B cell (primary cell): ENCODE measurements at regions of chr7 and their contacts with region 1.

Region 1: DNA sequence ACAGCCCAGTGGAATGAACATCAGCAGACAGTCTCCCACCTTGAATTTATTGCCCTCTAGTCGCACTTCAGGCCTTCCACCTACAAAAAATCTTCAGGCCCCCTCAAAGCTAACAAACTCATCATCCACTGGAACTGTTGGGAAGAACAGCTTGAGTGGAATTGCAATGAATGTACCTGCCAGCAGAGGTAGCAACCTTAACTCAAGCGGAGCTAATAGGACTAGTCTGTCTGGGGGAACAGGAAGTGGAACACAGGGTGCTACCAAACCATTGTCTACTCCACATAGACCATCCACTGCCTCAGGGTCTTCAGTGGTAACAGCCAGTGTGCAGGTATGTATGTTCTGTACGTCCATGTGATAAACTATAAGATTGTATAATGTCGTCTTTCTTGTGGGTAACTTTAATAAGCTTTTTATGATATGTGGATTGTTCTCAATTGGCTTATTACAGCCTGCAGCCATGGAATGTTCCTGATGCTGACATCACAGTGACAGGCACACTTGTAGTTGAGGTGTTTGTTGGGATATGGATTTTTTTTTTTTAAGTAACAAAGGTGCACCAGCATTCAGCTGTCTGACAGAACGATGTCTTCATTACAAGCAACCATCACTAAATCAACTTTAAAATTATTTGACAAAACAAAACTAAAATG is 53.3 kb downstream of the UBN2 start:
- DNase-seq: no peak
- ATAC-seq: no peak
- H3K4me3 ChIP-seq: no peak overlapping the region
- H3K4me3 Mint-ChIP-seq: no peak overlapping the region
- H3K27ac ChIP-seq: no peak overlapping the region
- H3K27ac Mint-ChIP-seq: no peak overlapping the region
- H3K4me1 ChIP-seq: no peaks in the 10 kb centered on the region
- H3K4me1 Mint-ChIP-seq: no peaks in the 10 kb centered on the region
- H3K27me3 ChIP-seq: no peaks in the 10 kb centered on the region
- H3K27me3 Mint-ChIP-seq: no peaks in the 10 kb centered on the region
- CTCF ChIP-seq: no peak

Region 2: DNA sequence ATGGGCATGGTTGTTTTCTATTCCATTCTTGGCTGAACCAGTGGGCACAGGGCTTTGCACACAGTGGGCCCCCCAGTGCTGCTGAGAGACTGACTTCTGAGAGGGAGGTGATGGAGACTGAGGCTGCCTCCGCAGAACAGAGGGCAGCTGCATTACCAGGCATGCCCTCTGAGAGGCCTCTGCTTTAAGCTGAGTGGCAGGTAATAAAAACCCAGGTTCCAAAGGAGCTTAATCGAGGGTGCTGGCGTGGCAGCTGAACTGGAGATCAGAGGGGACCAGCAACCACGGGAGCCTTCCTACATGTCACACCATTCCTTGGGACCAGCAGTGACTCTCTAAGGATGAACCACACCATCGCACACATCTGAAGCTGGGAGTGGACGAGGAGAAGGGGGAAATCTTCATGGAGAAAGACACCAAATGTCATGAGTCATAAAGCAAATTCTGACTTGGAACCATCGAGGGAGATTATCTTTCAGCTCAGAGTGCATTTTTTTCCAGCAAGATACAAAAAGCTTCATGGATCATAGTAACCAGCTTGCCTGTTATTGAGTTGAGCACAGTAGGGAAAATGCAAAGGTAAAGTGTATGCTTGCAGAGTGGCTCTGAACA is 468.8 kb after region 1 on chr7:
- CTCF ChIA-PET with region 1: no interaction called
- POLR2A ChIA-PET with region 1: no interaction called
- intact Hi-C with region 1: no loop called
- DNase-seq: no peak
- ATAC-seq: no peak
- H3K4me3 ChIP-seq: no peak overlapping the region
- H3K4me3 Mint-ChIP-seq: no peak overlapping the region
- H3K27ac ChIP-seq: no peak overlapping the region
- H3K27ac Mint-ChIP-seq: no peak overlapping the region
- H3K4me1 ChIP-seq: no peaks in the 10 kb centered on the region
- H3K4me1 Mint-ChIP-seq: peaks cover 13% of the 10 kb centered on the region
- H3K27me3 ChIP-seq: no peaks in the 10 kb centered on the region
- H3K27me3 Mint-ChIP-seq: no peaks in the 10 kb centered on the region
- CTCF ChIP-seq: no peak

Region 3: DNA sequence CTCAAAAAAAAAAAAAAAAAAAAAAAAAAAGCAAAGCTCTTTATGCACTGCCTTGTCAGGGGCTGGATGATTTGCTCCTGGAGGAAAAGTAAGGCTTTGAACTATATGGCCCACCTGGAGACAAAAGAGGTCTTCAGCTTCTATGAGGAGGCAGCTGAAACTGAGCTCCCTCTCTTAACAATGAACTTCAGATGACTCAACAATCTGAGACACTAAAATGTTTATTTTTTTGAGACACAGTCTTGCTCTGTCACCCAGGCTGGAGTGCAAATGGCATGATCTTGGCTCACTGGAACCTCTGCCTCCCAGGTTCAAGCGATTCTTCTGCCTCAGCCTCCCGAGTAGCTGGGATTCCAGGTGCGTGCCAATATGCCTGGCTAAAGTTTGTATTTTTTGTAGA is 1156.2 kb after region 1 on chr7:
- CTCF ChIA-PET with region 1: no interaction called
- POLR2A ChIA-PET with region 1: interaction called, 10 read pairs
- intact Hi-C with region 1: no loop called
- DNase-seq: no peak
- ATAC-seq: no peak
- H3K4me3 ChIP-seq: no peak overlapping the region
- H3K4me3 Mint-ChIP-seq: no peak overlapping the region
- H3K27ac ChIP-seq: no peak overlapping the region
- H3K27ac Mint-ChIP-seq: no peak overlapping the region
- H3K4me1 ChIP-seq: no peaks in the 10 kb centered on the region
- H3K4me1 Mint-ChIP-seq: no peaks in the 10 kb centered on the region
- H3K27me3 ChIP-seq: no peaks in the 10 kb centered on the region
- H3K27me3 Mint-ChIP-seq: no peaks in the 10 kb centered on the region
- CTCF ChIP-seq: no peak